ENCODE measurements at regions of chr11 and their contacts with region 1.

Region 1: GRCh38 chr11:47348859-47349258 is 3.6 kb downstream of the MYBPC3 start:
- DNase-seq: no peak
- H3K4me3 ChIP-seq: no peak overlapping the region
- H3K27ac ChIP-seq: no peak overlapping the region
- H3K4me1 ChIP-seq: no peaks in the 10 kb centered on the region
- H3K27me3 ChIP-seq: no peaks in the 10 kb centered on the region
- CTCF ChIP-seq: no peak
- POLR2A ChIP-seq: no peak

Region 2: DNA sequence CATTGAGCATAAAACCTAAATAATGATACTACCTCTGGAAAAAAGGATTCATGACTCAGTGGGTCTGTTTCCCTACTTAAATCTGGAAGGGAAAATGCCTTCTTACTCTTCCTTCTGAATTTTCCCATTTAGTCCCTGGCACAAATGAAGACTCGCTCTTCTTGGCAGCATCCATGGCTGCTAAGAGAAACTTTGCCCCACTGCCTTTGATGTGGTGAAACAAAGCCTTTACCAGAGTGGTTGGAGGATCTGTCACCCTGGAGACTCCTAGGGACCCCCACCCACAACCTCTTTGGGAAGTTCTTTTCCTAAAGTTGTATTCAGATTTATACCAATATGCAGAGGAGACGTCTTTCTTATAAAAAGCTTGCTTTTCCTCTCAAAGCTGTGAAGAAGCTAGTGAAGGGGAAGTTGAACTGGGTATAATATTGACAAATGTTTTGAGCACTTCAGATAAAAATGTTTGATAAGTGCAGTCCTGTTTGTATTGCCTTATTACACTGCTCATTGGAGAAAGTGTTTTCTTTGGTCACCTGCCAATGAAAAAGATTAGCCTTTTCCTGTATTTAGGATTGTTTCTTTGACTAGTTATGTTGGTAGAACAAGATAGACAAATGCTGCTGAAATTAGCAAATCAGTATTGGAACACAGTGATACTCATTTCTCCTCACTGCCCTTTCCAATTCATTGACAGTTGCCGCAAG is 249.5 kb before region 1 on chr11:
- intact Hi-C with region 1: no loop called
- DNase-seq: no peak
- H3K4me3 ChIP-seq: no peak overlapping the region
- H3K27ac ChIP-seq: no peak overlapping the region
- H3K4me1 ChIP-seq: no peaks in the 10 kb centered on the region
- H3K27me3 ChIP-seq: no peaks in the 10 kb centered on the region
- CTCF ChIP-seq: no peak
- POLR2A ChIP-seq: no peak

Region 3: GRCh38 chr11:47161134-47161854 is 187.6 kb before region 1 on chr11:
- intact Hi-C with region 1: loop called (anchors 10 kb)
- DNase-seq: peak; percentile 53 to 62
- H3K4me3 ChIP-seq: no peak overlapping the region
- H3K27ac ChIP-seq: peak overlapping the region in 1 of 2 donors; percentile 3
- H3K4me1 ChIP-seq: no peaks in the 10 kb centered on the region
- H3K27me3 ChIP-seq: no peaks in the 10 kb centered on the region
- CTCF ChIP-seq: peak; percentile 34 to 68 (median 48)
- POLR2A ChIP-seq: no peak

Measured in uterus (tissue), 4 donors.